K562 (cell line): ENCODE measurements at regions of chr5 and their contacts with region 1.

Region 1: DNA sequence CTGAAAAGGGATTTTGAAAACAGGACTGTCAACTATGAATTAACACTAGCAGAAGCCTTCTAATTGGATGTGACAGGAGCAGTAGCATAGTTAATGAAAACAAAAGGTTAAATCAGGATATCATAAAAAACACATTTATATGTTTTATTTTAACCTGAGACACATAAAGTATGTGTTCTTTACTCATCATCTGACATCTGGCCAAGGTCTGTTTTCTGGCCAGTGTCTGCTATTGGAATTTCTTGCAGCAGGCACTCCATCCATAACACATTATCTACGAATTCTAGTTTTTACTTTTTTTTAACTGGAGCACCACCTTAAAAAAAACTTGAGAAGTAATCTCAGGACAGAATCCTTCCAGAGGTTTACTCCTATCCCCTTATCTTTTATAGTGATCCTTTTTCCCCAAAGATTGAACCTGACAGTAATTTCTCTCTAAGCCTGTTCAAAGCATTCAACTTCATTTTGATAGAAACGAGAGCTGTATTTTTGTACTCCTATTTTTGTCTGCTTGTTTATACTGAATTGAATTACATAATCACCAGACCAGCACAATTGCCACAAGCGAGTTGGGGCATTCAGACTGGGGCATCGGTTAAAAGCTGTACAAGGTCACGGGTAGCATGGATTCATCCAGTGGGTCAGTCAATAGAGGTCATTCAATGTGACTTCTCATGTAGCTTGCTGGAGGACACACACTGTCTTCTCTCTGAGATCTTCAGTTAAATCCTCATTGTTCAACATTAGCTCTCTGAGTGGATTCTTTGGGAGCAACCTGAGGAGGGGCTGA is 205.6 kb upstream of the CLINT1 start:
- DNase-seq: no peak
- ATAC-seq: no peak
- H3K4me3 ChIP-seq: no peak overlapping the region
- H3K27ac ChIP-seq: no peak overlapping the region
- H3K4me1 ChIP-seq: no peaks in the 10 kb centered on the region
- H3K27me3 ChIP-seq: no peaks in the 10 kb centered on the region
- CTCF ChIP-seq: no peak
- EP300 ChIP-seq: no peak
- POLR2A ChIP-seq: no peak
- RAD21 ChIP-seq: no peak

Region 2: GRCh38 chr5:157690690-157691433 is 373.7 kb before region 1 on chr5:
- CTCF ChIA-PET with region 1: no interaction called
- POLR2A ChIA-PET with region 1: no interaction called
- in situ Hi-C with region 1: no loop called
- intact Hi-C with region 1: no loop called
- DNase-seq: no peak
- ATAC-seq: no peak
- H3K4me3 ChIP-seq: no peak overlapping the region
- H3K27ac ChIP-seq: no peak overlapping the region
- H3K4me1 ChIP-seq: peaks cover 0 to 8% of the 10 kb centered on the region in 2 experiments; a peak in 2 of 5 replicates
- H3K27me3 ChIP-seq: no peaks in the 10 kb centered on the region
- CTCF ChIP-seq: no peak
- EP300 ChIP-seq: no peak
- POLR2A ChIP-seq: no peak
- RAD21 ChIP-seq: no peak

Region 3: DNA sequence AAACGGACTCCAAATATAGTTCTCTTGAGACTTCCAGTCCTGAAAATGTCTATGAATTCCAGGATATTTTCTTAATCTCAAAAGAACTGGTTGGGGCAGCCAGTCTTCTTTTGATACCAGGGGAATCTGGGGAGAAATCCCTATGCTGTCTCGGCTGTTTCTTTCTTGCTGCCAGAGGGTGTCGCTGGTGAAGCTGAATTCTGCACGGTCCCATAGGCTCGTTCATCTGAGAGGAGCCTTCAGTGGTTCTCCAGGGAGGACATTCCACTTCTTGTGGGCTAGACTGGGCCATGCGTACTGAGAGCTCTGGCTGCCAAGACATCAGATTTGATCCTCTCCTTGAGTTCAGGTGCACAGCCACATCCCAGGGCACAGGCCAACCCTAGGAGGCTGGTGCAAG is 50.6 kb before region 1 on chr5:
- CTCF ChIA-PET with region 1: no interaction called
- POLR2A ChIA-PET with region 1: no interaction called
- in situ Hi-C with region 1: no loop called
- intact Hi-C with region 1: loop called (anchors 5 kb)
- DNase-seq: peak in 2 of 4 experiments; percentile 26 to 31
- ATAC-seq: peak; percentile 84
- H3K4me3 ChIP-seq: no peak overlapping the region
- H3K27ac ChIP-seq: no peak overlapping the region
- H3K4me1 ChIP-seq: no peaks in the 10 kb centered on the region
- H3K27me3 ChIP-seq: no peaks in the 10 kb centered on the region
- CTCF ChIP-seq: peak; percentile 48 to 61 (median 50)
- EP300 ChIP-seq: no peak
- POLR2A ChIP-seq: no peak
- RAD21 ChIP-seq: peak; percentile 60